WTC11 (cell line): ENCODE measurements at regions of chr3 and their contacts with region 1.

Region 1: GRCh38 chr3:149586871-149587270 is 71.0 kb downstream of the WWTR1 start:
- DNase-seq: no peak
- ATAC-seq: peak; percentile 28; the same call in 1 of the 2 replicates
- H3K4me3 Mint-ChIP-seq: no peak overlapping the region; the same call in 1 of the 2 replicates
- H3K27ac Mint-ChIP-seq: no peak overlapping the region
- H3K4me1 Mint-ChIP-seq: peaks cover 46% of the 10 kb centered on the region
- H3K27me3 Mint-ChIP-seq: no peaks in the 10 kb centered on the region
- CTCF ChIP-seq: no peak

Region 2: DNA sequence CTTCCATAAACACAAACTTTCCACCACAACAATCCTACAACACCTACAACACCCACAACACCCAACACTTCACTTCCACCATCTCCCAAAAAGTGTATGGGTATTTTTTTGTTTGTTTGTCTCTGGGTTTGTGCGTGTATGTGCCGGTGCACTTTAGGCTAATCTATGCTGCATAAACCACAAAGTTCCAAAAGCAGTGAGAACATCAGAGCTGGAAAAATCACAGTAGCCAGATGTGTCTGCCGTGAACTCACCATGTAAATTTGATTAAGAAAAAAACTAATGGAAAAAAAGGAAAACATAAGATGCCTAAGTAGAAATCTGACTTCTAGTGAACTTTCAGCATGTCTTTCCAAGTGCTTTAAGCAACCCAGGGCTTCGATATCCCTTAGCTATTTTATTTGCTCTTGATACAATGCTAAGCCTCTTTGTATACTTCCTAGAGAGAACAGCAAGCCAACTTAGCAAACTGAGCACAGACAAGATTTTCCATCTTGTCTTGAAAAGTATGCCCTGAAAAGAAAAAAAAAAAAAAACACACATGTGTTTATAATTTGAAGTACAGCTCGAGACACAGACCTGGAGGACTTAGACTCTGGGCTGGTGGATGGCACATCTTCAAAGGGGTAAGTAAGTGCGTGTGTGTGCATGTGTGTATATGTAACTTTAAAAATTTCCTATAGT is 20.4 kb before region 1 on chr3:
- CTCF ChIA-PET with region 1: interaction called, 12 read pairs
- POLR2A ChIA-PET with region 1: no interaction called
- DNase-seq: no peak
- ATAC-seq: no peak
- H3K4me3 Mint-ChIP-seq: no peak overlapping the region
- H3K27ac Mint-ChIP-seq: peak overlapping the region; percentile 61
- H3K4me1 Mint-ChIP-seq: peaks cover 31% of the 10 kb centered on the region
- H3K27me3 Mint-ChIP-seq: no peaks in the 10 kb centered on the region
- CTCF ChIP-seq: no peak